Psoas muscle (tissue), 8 donors: ENCODE measurements at regions of chr1 and their contacts with region 1.

Region 1: GRCh38 chr1:166839600-166840308 is 479 bp downstream of the POGK start:
- DNase-seq: peak; percentile 72 to 81
- ATAC-seq: peak; percentile 12 to 53 (median 43)
- H3K4me3 ChIP-seq: peak overlapping the region; percentile 83
- H3K27ac ChIP-seq: peak overlapping the region; percentile 97
- H3K4me1 ChIP-seq: peaks cover 59% of the 10 kb centered on the region
- H3K27me3 ChIP-seq: no peaks in the 10 kb centered on the region
- CTCF ChIP-seq: peak; percentile 11

Region 2: DNA sequence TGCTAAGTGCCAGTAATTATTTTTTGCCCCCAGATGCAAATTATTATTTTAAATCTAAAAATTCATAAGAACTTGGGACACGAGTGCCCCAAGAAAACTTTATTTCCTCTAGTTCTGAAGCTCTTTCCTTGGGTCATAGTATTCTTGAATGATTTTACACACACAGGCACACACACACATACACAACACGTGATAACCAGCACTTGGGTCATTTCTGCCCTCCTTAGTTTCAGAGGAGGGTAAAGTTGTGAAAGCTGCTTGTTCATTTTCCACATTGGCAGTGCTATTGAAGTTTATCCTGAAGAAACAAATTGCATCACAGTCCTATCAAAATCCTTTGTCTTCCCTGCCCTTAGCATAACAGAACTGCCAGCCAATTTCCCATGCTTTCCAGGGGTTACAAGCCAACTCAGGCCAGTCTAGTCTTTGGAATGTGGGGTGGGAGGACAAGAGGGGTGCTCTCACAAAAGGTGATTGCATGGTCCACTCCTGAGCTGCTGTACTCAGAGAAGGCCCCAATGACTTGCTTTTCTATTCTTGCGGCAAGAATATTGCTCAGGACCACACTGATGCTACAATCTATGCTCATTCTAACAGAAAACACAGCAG is 99.0 kb before region 1 on chr1:
- intact Hi-C with region 1: no loop called
- DNase-seq: no peak
- ATAC-seq: no peak
- H3K4me3 ChIP-seq: no peak overlapping the region
- H3K27ac ChIP-seq: no peak overlapping the region
- H3K4me1 ChIP-seq: no peaks in the 10 kb centered on the region
- H3K27me3 ChIP-seq: no peaks in the 10 kb centered on the region
- CTCF ChIP-seq: no peak

Region 3: DNA sequence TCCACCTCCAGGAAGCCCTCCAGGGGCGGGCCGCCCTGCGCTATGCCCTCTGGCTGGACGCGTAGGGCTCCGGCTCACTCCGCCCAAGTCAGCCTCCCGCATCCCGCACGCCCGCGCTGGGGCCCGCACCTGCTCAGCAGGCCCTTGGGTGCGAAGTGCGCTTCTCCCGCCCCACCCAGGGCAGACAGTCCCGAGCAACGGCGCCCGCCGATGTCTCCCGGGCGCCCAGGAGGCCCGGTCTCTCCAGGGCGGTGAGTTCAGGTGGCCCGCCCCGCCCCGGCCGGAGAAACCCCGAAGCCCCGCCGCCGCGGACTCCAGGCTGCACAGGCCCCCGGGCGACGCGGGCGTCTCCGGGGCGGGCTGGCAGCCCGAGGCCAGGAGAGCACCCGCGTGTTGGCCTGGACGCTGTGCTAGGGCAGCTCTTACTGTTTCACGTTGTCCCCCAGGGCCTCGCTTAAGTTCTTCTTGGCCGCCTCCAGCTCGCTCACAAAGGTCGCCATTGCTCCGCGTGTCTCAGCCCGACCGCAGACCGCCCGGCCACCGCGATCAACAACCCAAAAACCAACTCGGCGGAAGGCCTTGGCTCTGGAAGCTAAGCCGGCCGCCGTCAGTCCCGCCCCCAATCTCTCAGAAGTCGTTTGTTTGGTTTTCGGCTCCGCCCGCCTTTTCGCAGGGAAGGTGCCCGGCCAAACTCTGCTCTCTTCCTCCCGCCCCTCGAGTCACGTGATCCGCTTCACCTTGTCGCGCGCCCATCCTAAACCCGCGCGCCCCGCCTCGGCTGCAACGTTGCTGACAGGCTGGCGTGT is 36.2 kb after region 1 on chr1 and contains the start of gene TADA1:
- intact Hi-C with region 1: loop called (anchors 2 to 5 kb)
- DNase-seq: peak; percentile 99
- ATAC-seq: peak; percentile 95 to 96 (median 96)
- H3K4me3 ChIP-seq: peak within 1 kb of the TSS; percentile 84
- H3K27ac ChIP-seq: peak within 1 kb of the TSS; percentile 90
- H3K4me1 ChIP-seq: peaks cover 16% of the 10 kb centered on the region
- H3K27me3 ChIP-seq: no peaks in the 10 kb centered on the region
- CTCF ChIP-seq: peak; percentile 28
- total RNA-seq, gene TADA1: 8.3 to 9.9 (median 8.9) TPM

Region 4: DNA sequence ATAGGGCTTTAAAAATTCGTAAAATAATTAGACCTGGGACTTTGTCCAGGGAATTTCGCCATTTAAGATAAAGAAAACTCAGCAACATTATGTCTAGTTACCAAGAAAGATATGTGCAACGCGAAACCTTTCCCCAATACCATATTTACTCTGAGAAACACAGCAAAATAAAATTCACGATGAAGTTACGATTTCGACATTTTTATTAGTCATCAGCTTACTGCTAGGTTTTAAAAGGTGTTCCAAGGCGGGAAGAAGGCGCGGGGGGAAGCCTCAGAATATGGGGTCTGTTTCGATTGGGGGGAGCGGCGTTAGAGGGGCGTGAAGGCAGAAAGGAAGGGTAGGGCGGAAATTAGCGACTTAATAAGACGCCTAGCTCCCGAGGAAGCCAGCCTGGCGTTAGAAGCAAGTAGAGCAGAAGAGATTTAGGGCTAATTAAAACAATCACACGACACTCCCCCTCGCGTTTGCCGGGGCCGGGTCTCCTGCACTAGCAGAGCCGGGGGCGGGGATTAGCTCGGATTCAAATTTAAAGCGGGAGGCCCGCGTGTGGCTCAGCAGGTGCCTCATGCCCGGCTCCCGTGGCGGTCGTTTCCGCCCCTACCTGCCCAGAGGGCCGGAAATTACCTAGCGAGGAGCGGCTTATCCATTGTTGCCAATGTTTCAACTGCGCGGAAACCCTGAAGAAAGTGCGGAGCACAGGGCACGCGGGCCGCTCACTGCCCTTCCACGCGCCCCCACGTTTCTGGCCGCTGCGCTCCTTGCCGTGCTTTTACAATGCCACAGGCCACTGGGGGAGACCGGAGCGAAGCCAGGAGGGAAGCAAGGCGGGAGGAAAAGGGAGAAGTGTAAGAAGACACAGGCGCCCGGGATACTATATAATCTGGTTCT is 380.1 kb after region 1 on chr1:
- intact Hi-C with region 1: loop called in 1 of 2 experiments (anchors 10 kb)
- DNase-seq: peak; percentile 74 to 87
- ATAC-seq: peak; percentile 39 to 53 (median 44)
- H3K4me3 ChIP-seq: peak overlapping the region; percentile 87
- H3K27ac ChIP-seq: peak overlapping the region; percentile 90
- H3K4me1 ChIP-seq: peaks cover 15% of the 10 kb centered on the region
- H3K27me3 ChIP-seq: no peaks in the 10 kb centered on the region
- CTCF ChIP-seq: no peak